Activated CD4-positive, alpha-beta memory T cell treated with anti-CD3 and anti-CD28 coated beads, Interleukin-2, amount 10 ng/mL, durations not matched to agents 7 days and 5 days (primary cell): ENCODE measurements at regions of chr12 and their contacts with region 1.

Region 1: GRCh38 chr12:92145731-92146496 is at the start of gene BTG1:
- DNase-seq: peak; percentile 100
- H3K4me3 Mint-ChIP-seq: peak within 1 kb of the TSS; percentile 99
- H3K27ac Mint-ChIP-seq: peak within 1 kb of the TSS; percentile 98
- H3K4me1 Mint-ChIP-seq: peaks cover 27% of the 10 kb centered on the region
- H3K27me3 Mint-ChIP-seq: no peaks in the 10 kb centered on the region
- total RNA-seq, gene BTG1: 217 to 227 TPM

Region 2: GRCh38 chr12:91778938-91779400 is 366.9 kb before region 1 on chr12:
- CTCF ChIA-PET with region 1: interaction called, 7 read pairs
- POLR2A ChIA-PET with region 1: interaction called, 27 read pairs
- DNase-seq: peak; percentile 61
- H3K4me3 Mint-ChIP-seq: peak overlapping the region; percentile 63
- H3K27ac Mint-ChIP-seq: peak overlapping the region; percentile 72
- H3K4me1 Mint-ChIP-seq: peaks cover 24% of the 10 kb centered on the region
- H3K27me3 Mint-ChIP-seq: no peaks in the 10 kb centered on the region

Region 3: GRCh38 chr12:91991399-91992187 is 154.3 kb before region 1 on chr12:
- CTCF ChIA-PET with region 1: interaction called, 5 read pairs
- POLR2A ChIA-PET with region 1: interaction called, 24 read pairs
- DNase-seq: no peak
- H3K4me3 Mint-ChIP-seq: no peak overlapping the region
- H3K27ac Mint-ChIP-seq: no peak overlapping the region
- H3K4me1 Mint-ChIP-seq: peaks cover 4% of the 10 kb centered on the region
- H3K27me3 Mint-ChIP-seq: no peaks in the 10 kb centered on the region

Region 4: GRCh38 chr12:92049403-92049802 is 96.5 kb before region 1 on chr12:
- CTCF ChIA-PET with region 1: interaction called, 4 read pairs
- POLR2A ChIA-PET with region 1: interaction called, 44 read pairs
- DNase-seq: no peak
- H3K4me3 Mint-ChIP-seq: no peak overlapping the region
- H3K27ac Mint-ChIP-seq: no peak overlapping the region
- H3K4me1 Mint-ChIP-seq: peaks cover 65% of the 10 kb centered on the region
- H3K27me3 Mint-ChIP-seq: no peaks in the 10 kb centered on the region

Region 5: DNA sequence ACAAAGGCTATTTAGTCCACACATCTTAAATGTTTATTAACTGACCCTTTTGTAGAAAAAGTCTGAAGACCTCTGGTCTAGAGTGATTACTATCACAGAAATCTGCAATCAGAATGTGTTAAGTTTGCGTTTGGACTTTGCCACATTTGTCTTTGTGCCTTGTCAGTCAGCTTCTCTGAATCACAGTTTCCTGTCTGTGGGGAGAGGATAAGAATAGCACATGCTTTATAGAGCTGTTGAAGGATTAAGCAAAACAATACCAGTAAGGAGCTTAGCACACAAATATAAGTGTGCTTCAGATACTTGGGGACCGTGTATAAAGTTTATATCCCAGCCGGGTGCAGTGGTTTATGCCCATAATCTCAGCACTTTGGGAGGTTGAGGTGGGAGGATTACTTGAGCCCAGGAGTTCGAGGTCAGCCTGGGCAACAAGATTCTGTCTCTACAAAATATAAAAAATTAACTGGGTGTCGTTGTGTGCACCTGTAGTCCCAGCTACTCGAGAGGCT is 62.8 kb after region 1 on chr12:
- CTCF ChIA-PET with region 1: interaction called, 48 read pairs
- POLR2A ChIA-PET with region 1: interaction called, 218 read pairs
- DNase-seq: peak; percentile 35
- H3K4me3 Mint-ChIP-seq: peak overlapping the region; percentile 53
- H3K27ac Mint-ChIP-seq: peak overlapping the region; percentile 90
- H3K4me1 Mint-ChIP-seq: peaks cover 36% of the 10 kb centered on the region
- H3K27me3 Mint-ChIP-seq: no peaks in the 10 kb centered on the region

Region 6: DNA sequence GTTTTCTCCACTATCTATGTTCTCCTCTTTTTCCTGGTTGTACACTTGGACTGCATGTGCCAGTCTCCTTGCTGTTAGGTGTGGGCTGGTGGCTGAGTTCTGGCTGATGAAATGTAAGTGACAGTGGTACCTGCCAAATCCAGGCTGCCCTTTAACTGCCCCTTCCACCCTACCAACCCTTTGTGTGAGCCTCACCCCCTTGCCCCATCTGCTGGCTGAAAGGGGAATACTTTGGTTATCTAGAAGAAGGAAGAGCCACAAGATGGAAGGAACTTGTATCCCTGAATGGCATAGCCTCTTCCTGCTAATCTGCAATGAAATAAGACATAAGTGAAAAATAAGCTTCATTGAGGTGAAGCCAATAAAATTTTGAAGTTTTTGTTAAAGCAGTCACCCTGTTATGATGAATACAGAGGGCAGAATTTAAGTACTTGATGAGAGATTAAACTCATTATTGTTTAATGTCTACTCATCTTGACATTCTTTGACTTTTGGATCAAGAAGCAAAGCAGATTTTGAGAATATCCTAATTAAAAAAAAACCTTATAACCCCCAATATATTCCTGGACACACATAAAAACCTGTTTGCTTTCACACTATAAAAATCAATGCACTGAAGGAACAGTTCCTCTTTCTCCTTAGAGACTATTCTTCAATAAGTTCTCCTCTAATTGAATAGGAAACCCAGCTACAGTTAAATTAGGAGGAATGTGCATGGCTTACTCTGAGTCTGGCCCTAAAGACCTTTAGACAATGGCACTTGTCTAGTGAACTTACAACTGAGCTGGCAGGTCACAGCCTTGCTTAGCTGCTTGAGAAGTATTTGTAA is 262.4 kb after region 1 on chr12:
- CTCF ChIA-PET with region 1: interaction called, 44 read pairs
- POLR2A ChIA-PET with region 1: interaction called, 327 read pairs
- DNase-seq: peak; percentile 69
- H3K4me3 Mint-ChIP-seq: no peak overlapping the region
- H3K27ac Mint-ChIP-seq: peak overlapping the region; percentile 9
- H3K4me1 Mint-ChIP-seq: peaks cover 40% of the 10 kb centered on the region
- H3K27me3 Mint-ChIP-seq: no peaks in the 10 kb centered on the region

Region 7: GRCh38 chr12:92570056-92570753 is 424.3 kb after region 1 on chr12:
- CTCF ChIA-PET with region 1: interaction called, 20 read pairs
- POLR2A ChIA-PET with region 1: interaction called, 50 read pairs
- DNase-seq: peak; percentile 39
- H3K4me3 Mint-ChIP-seq: no peak overlapping the region
- H3K27ac Mint-ChIP-seq: no peak overlapping the region
- H3K4me1 Mint-ChIP-seq: peaks cover 22% of the 10 kb centered on the region
- H3K27me3 Mint-ChIP-seq: no peaks in the 10 kb centered on the region